Heart left ventricle (tissue), 16 donors: ENCODE measurements at regions of chr9 and their contacts with region 1.

Region 1: DNA sequence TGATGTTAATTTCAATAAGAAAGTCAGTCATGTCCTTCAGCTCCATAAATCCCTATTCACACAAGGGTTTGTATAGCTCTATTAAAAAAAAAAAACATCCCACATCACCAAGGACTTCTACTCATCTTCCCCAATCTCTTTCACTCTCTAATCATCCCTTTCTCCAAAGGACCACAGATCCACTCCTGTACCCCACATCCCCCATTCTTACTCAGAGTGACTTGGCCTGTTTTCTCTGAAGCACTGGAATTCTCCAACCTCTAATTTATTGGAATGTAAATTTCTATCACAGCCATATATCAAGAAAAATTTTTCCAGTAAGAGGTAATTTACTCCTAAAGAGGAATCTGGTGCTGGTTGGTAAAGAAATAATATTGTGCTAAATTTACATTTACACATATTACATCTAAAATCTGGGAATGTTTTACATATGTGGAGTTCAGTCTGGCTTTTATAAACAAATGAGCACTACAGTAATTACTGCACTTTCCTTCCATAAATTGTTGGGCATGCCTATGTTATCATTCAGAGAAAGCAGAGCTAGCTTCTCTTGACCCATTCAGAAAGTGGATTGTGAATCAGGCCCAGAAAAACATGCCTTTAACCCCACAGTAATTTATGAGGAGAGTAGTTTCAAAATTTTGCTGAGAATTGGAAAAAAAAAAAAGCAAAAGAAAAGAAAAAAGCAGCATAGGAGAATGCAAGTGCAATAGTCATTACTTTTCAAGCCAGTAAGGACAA is 399.5 kb upstream of the TNC start:
- DNase-seq: no peak
- ATAC-seq: no peak
- H3K4me3 ChIP-seq: no peak overlapping the region
- H3K27ac ChIP-seq: no peak overlapping the region
- H3K4me1 ChIP-seq: no peaks in the 10 kb centered on the region
- H3K27me3 ChIP-seq: no peaks in the 10 kb centered on the region
- CTCF ChIP-seq: no peak
- POLR2A ChIP-seq: no peak

Region 2: DNA sequence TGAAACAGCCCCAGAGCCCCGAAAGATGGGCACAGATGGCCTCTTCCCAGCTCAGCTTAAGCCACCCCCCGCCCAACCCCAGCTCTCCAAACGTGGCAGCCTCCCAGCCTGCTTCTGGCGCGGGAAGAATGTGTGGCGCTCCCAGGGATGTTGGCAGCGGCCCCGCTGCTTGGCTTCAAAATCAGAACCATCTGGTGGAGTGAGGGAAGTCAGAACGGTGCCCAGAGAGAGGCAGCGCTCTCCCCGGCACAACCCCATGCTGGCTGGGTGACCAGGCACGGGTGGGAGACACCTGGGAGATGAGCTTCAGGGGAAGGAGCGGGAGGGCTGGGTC is 1267.3 kb before region 1 on chr9:
- intact Hi-C with region 1: no loop called
- DNase-seq: peak; percentile 77 to 92 (median 81)
- ATAC-seq: peak; percentile 91 to 95 (median 92)
- H3K4me3 ChIP-seq: peak overlapping the region in 2 of 12 donors; percentile 2 to 5
- H3K27ac ChIP-seq: peak overlapping the region in 10 of 12 donors; percentile 6 to 75 (median 65)
- H3K4me1 ChIP-seq: peaks cover 0 to 28% (median 6%) of the 10 kb centered on the region in 12 donors
- H3K27me3 ChIP-seq: no peaks in the 10 kb centered on the region
- CTCF ChIP-seq: no peak
- POLR2A ChIP-seq: no peak

Region 3: DNA sequence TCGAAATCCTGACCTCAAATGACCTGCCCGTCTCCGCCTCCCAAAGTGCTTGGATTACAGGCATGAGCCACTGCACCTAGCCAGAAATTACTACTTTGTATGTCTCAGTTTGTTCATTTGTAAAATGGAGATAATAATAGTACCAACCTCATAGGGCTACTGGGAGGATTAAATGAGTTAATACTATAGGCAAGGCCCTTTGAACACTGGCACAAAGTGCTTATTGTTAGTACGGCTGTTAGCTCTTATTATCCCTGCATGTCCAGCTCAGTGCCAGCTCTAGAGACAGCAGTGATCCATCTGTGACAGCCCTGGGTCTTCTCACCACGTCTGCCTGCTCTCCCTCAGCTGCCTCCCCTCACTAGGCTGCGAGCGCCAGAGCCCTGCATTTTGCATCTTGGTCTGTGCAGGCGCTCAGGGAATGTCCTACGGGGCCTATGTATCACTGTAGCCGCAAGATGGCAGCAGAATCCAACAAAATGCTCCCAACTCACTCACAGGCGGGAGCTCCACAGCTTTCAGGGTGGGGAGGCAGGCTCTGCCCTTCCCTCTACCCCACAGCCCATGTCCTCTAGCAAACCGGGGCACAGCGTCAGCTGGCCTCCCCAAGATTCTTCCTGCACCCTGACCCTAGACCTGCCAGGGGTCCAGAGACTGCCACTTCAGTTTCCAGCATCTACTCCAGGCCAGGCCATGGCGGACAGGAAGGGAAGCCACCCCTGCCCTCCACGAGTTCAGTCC is 1112.0 kb before region 1 on chr9:
- intact Hi-C with region 1: loop called in 2 of 10 experiments (anchors 10 kb)
- DNase-seq: peak; percentile 73 to 81 (median 79)
- ATAC-seq: peak; percentile 76 to 95 (median 92)
- H3K4me3 ChIP-seq: no peak overlapping the region
- H3K27ac ChIP-seq: no peak overlapping the region
- H3K4me1 ChIP-seq: peaks cover 0 to 7% (median 0%) of the 10 kb centered on the region in 12 donors
- H3K27me3 ChIP-seq: no peaks in the 10 kb centered on the region
- CTCF ChIP-seq: peak; percentile 72 to 87 (median 82)
- POLR2A ChIP-seq: no peak

Region 4: GRCh38 chr9:115764645-115765044 is 247.1 kb after region 1 on chr9:
- intact Hi-C with region 1: no loop called
- DNase-seq: peak in 1 of 5 donors; percentile 6
- ATAC-seq: peak in 2 of 4 donors; percentile 16 to 58
- H3K4me3 ChIP-seq: no peak overlapping the region
- H3K27ac ChIP-seq: peak overlapping the region in 1 of 12 donors; percentile 34
- H3K4me1 ChIP-seq: peaks cover 0 to 3% (median 0%) of the 10 kb centered on the region in 12 donors
- H3K27me3 ChIP-seq: no peaks in the 10 kb centered on the region
- CTCF ChIP-seq: no peak
- POLR2A ChIP-seq: no peak